T-cell (primary cell): ENCODE measurements at regions of chr3 and their contacts with region 1.

Region 1: GRCh38 chr3:49007068-49007770 is at the start of gene WDR6:
- DNase-seq: peak; percentile 89 to 99 (median 96)
- ATAC-seq: peak; percentile 90 to 92 (median 91)
- H3K4me3 ChIP-seq: peak within 1 kb of the TSS; percentile 72 to 96
- H3K4me3 Mint-ChIP-seq: peak within 1 kb of the TSS; percentile 93 to 100 (median 99)
- H3K27ac ChIP-seq: peak within 1 kb of the TSS; percentile 95
- H3K27ac Mint-ChIP-seq: peak within 1 kb of the TSS; percentile 100
- H3K4me1 ChIP-seq: peaks cover 0 to 27% of the 10 kb centered on the region in 2 experiments
- H3K4me1 Mint-ChIP-seq: peaks cover 29 to 40% (median 35%) of the 10 kb centered on the region in 3 donors
- H3K27me3 ChIP-seq: no peaks in the 10 kb centered on the region
- H3K27me3 Mint-ChIP-seq: no peaks in the 10 kb centered on the region
- total RNA-seq, gene WDR6: 204 to 300 (median 293) TPM

Region 2: DNA sequence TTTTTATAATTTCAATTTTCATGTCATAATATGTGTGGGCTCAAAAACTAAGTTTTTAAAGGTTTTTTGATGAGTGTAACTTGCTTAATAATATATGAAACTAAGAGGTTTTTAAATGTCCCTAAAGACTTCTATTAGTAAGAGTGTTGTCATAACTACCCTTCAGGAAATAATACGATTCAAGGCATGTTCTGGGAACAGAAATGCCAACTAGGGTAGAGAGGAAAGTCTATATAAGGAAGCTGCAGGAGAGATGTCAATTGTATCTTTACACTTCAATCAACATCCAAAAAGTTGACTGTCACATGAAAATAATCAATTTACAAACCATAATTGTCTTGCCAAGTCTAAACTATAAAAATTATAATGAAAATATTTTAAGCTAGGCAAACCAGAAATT is 1301.8 kb before region 1 on chr3:
- CTCF ChIA-PET with region 1: no interaction called
- POLR2A ChIA-PET with region 1: no interaction called
- DNase-seq: no peak
- ATAC-seq: no peak
- H3K4me3 ChIP-seq: no peak overlapping the region
- H3K4me3 Mint-ChIP-seq: no peak overlapping the region
- H3K27ac ChIP-seq: no peak overlapping the region
- H3K27ac Mint-ChIP-seq: no peak overlapping the region
- H3K4me1 ChIP-seq: no peaks in the 10 kb centered on the region
- H3K4me1 Mint-ChIP-seq: no peaks in the 10 kb centered on the region
- H3K27me3 ChIP-seq: no peaks in the 10 kb centered on the region
- H3K27me3 Mint-ChIP-seq: no peaks in the 10 kb centered on the region

Region 3: GRCh38 chr3:49028673-49029562 is 21.7 kb after region 1 on chr3 and contains the start of gene IMPDH2:
- CTCF ChIA-PET with region 1: interaction called in 1 of 2 experiments, 26 read pairs
- POLR2A ChIA-PET with region 1: interaction called, 8 to 9 read pairs
- DNase-seq: peak; percentile 82 to 98 (median 90)
- ATAC-seq: peak; percentile 94 to 98 (median 96)
- H3K4me3 ChIP-seq: peak within 1 kb of the TSS; percentile 79 to 81
- H3K4me3 Mint-ChIP-seq: peak within 1 kb of the TSS; percentile 84 to 91 (median 89)
- H3K27ac ChIP-seq: peak within 1 kb of the TSS; percentile 91
- H3K27ac Mint-ChIP-seq: peak within 1 kb of the TSS; percentile 91 to 93
- H3K4me1 ChIP-seq: peaks cover 7 to 20% of the 10 kb centered on the region in 2 experiments
- H3K4me1 Mint-ChIP-seq: peaks cover 35 to 44% (median 43%) of the 10 kb centered on the region in 3 donors
- H3K27me3 ChIP-seq: no peaks in the 10 kb centered on the region
- H3K27me3 Mint-ChIP-seq: no peaks in the 10 kb centered on the region
- total RNA-seq, gene IMPDH2: 110 to 160 (median 149) TPM